ENCODE measurements at regions of chr6 and their contacts with region 1.

Region 1: GRCh38 chr6:2563635-2564034 is 187.1 kb downstream of the MYLK4 start:
- DNase-seq: peak; percentile 73
- H3K4me3 Mint-ChIP-seq: peak overlapping the region; percentile 44
- H3K27ac Mint-ChIP-seq: no peak overlapping the region
- H3K4me1 Mint-ChIP-seq: peaks cover 13% of the 10 kb centered on the region
- H3K27me3 Mint-ChIP-seq: peaks cover 78% of the 10 kb centered on the region

Region 2: GRCh38 chr6:2245094-2245876 is 318.4 kb before region 1 on chr6 and contains the start of gene GMDS:
- intact Hi-C with region 1: loop called (anchors 5 kb)
- DNase-seq: peak; percentile 96
- H3K4me3 Mint-ChIP-seq: peak within 1 kb of the TSS; percentile 93
- H3K27ac Mint-ChIP-seq: peak within 1 kb of the TSS; percentile 95
- H3K4me1 Mint-ChIP-seq: peaks cover 54% of the 10 kb centered on the region
- H3K27me3 Mint-ChIP-seq: no peaks in the 10 kb centered on the region
- total RNA-seq, gene GMDS: 38.2 and 47.4 TPM in 2 replicates

Region 3: GRCh38 chr6:2505624-2506023 is 58.0 kb before region 1 on chr6:
- intact Hi-C with region 1: no loop called
- DNase-seq: no peak
- H3K4me3 Mint-ChIP-seq: no peak overlapping the region
- H3K27ac Mint-ChIP-seq: no peak overlapping the region
- H3K4me1 Mint-ChIP-seq: no peaks in the 10 kb centered on the region
- H3K27me3 Mint-ChIP-seq: peaks cover 37% of the 10 kb centered on the region

Region 4: GRCh38 chr6:2531426-2532215 is 32.0 kb before region 1 on chr6:
- intact Hi-C with region 1: loop called (anchors 5 kb)
- DNase-seq: no peak
- H3K4me3 Mint-ChIP-seq: no peak overlapping the region
- H3K27ac Mint-ChIP-seq: no peak overlapping the region
- H3K4me1 Mint-ChIP-seq: peaks cover 8% of the 10 kb centered on the region
- H3K27me3 Mint-ChIP-seq: peaks cover 73% of the 10 kb centered on the region

Region 5: DNA sequence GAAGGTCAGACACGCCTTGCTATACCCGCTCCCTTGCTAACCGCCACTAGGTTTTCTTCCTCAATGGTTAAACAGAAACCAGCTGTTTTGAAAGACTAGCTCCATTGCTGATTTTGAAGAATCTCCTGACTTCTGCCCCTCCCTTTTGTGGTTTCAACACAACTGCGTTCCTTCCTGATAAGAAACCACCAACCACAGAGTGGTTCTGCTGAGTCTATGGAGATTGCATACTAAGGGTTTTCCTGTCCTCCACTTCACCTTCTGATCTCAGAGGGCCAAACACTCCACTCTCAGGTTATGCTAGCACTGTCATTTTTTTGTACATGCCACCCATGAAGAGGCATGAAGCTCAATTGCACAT is 20.8 kb before region 1 on chr6:
- intact Hi-C with region 1: loop called (anchors 1 kb)
- DNase-seq: peak; percentile 93
- H3K4me3 Mint-ChIP-seq: peak overlapping the region; percentile 64
- H3K27ac Mint-ChIP-seq: peak overlapping the region; percentile 25
- H3K4me1 Mint-ChIP-seq: peaks cover 28% of the 10 kb centered on the region
- H3K27me3 Mint-ChIP-seq: peaks cover 69% of the 10 kb centered on the region

Measured in activated CD4-positive, alpha-beta T cell treated with anti-CD3 and anti-CD28 coated beads, Interleukin-2, amount 10 ng/mL, durations not matched to agents 24 days and 14 days (primary cell).